PC-9 (cell line): ENCODE measurements at regions of chr2 and their contacts with region 1.

Region 1: GRCh38 chr2:39492095-39492590 is 55.1 kb upstream of the MAP4K3 start:
- DNase-seq: peak in 1 of 2 experiments; percentile 92
- H3K4me3 ChIP-seq: peak overlapping the region; percentile 15; the same call in 1 of the 2 replicates
- H3K27ac ChIP-seq: peak overlapping the region; percentile 55
- H3K4me1 ChIP-seq: peaks cover 46% of the 10 kb centered on the region
- H3K27me3 ChIP-seq: no peaks in the 10 kb centered on the region
- CTCF ChIP-seq: no peak

Region 2: DNA sequence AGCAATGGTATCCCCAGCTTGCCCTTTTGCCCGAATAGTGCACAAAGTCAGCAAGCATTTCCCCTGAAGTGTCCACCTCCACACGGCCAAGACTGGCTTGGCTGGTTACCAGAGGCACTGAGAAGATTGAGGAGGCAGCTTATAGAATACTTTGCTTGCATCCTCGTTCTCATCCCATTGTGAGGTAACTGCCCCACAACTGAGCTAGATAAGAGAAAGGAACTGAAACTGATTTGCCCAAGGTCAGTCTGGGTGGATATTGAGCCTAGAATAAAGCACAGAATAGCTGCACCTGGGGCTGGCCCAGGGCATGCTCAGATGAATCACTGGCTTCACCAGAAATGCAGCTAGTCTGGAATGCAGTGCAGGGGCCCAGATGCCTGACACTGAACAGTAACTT is 22.3 kb before region 1 on chr2:
- CTCF ChIA-PET with region 1: no interaction called
- POLR2A ChIA-PET with region 1: interaction called, 11 read pairs
- intact Hi-C with region 1: no loop called
- DNase-seq: peak; percentile 66 to 76
- H3K4me3 ChIP-seq: peak overlapping the region; percentile 22; the same call in 1 of the 2 replicates
- H3K27ac ChIP-seq: peak overlapping the region; percentile 38
- H3K4me1 ChIP-seq: peaks cover 46% of the 10 kb centered on the region
- H3K27me3 ChIP-seq: no peaks in the 10 kb centered on the region
- CTCF ChIP-seq: no peak

Region 3: GRCh38 chr2:39523308-39524044 is 31.3 kb after region 1 on chr2:
- CTCF ChIA-PET with region 1: no interaction called
- POLR2A ChIA-PET with region 1: interaction called, 7 read pairs
- intact Hi-C with region 1: loop called (anchors 5 kb)
- DNase-seq: peak; percentile 49 to 91
- H3K4me3 ChIP-seq: no peak overlapping the region
- H3K27ac ChIP-seq: peak overlapping the region; percentile 51
- H3K4me1 ChIP-seq: peaks cover 22% of the 10 kb centered on the region
- H3K27me3 ChIP-seq: no peaks in the 10 kb centered on the region
- CTCF ChIP-seq: no peak

Region 4: GRCh38 chr2:39547811-39548719 is 55.9 kb after region 1 on chr2:
- CTCF ChIA-PET with region 1: interaction called, 4 read pairs
- POLR2A ChIA-PET with region 1: no interaction called
- intact Hi-C with region 1: loop called (anchors 1 kb)
- DNase-seq: peak; percentile 74 to 96
- H3K4me3 ChIP-seq: no peak overlapping the region
- H3K27ac ChIP-seq: peak overlapping the region; percentile 64
- H3K4me1 ChIP-seq: peaks cover 50% of the 10 kb centered on the region
- H3K27me3 ChIP-seq: no peaks in the 10 kb centered on the region
- CTCF ChIP-seq: no peak

Region 5: GRCh38 chr2:39568561-39569006 is 76.4 kb after region 1 on chr2:
- CTCF ChIA-PET with region 1: no interaction called
- POLR2A ChIA-PET with region 1: interaction called, 14 read pairs
- intact Hi-C with region 1: no loop called
- DNase-seq: peak; percentile 57 to 89
- H3K4me3 ChIP-seq: peak overlapping the region; percentile 40; the same call in 1 of the 2 replicates
- H3K27ac ChIP-seq: peak overlapping the region; percentile 83
- H3K4me1 ChIP-seq: peaks cover 49% of the 10 kb centered on the region
- H3K27me3 ChIP-seq: no peaks in the 10 kb centered on the region
- CTCF ChIP-seq: no peak